K562 (cell line): ENCODE measurements at regions of chr5 and their contacts with region 1.

Region 1: GRCh38 chr5:91280362-91281269 is 102.5 kb downstream of the ARRDC3 start:
- DNase-seq: peak; percentile 89 to 96 (median 92)
- ATAC-seq: peak; percentile 99
- H3K4me3 ChIP-seq: peak overlapping the region; percentile 39
- H3K27ac ChIP-seq: peak overlapping the region; percentile 84
- H3K4me1 ChIP-seq: peaks cover 16 to 21% of the 10 kb centered on the region in 2 experiments; a peak in 3 of 5 replicates
- H3K27me3 ChIP-seq: no peaks in the 10 kb centered on the region
- CTCF ChIP-seq: peak in 1 of 3 experiments; percentile 20; a peak in 2 of 6 replicates
- EP300 ChIP-seq: peak; percentile 70
- POLR2A ChIP-seq: peak; percentile 71
- RAD21 ChIP-seq: peak; percentile 23 to 34; a peak in 1 of 4 replicates

Region 2: GRCh38 chr5:91266184-91266705 is 14.4 kb before region 1 on chr5:
- CTCF ChIA-PET with region 1: interaction called, 3 read pairs
- POLR2A ChIA-PET with region 1: interaction called, 17 read pairs
- in situ Hi-C with region 1: no loop called
- intact Hi-C with region 1: no loop called
- DNase-seq: peak; percentile 38 to 61 (median 45)
- ATAC-seq: peak; percentile 80
- H3K4me3 ChIP-seq: no peak overlapping the region
- H3K27ac ChIP-seq: peak overlapping the region; percentile 49; the same call in 1 of the 3 replicates
- H3K4me1 ChIP-seq: peaks cover 0 to 7% of the 10 kb centered on the region in 2 experiments; a peak in 3 of 5 replicates
- H3K27me3 ChIP-seq: no peaks in the 10 kb centered on the region
- CTCF ChIP-seq: no peak
- EP300 ChIP-seq: no peak
- POLR2A ChIP-seq: no peak
- RAD21 ChIP-seq: no peak

Region 3: GRCh38 chr5:91291628-91292569 is 11.3 kb after region 1 on chr5:
- CTCF ChIA-PET with region 1: no interaction called
- POLR2A ChIA-PET with region 1: interaction called, 11 read pairs
- in situ Hi-C with region 1: no loop called
- intact Hi-C with region 1: no loop called
- DNase-seq: peak in 2 of 4 experiments; percentile 38 to 64
- ATAC-seq: peak; percentile 90
- H3K4me3 ChIP-seq: no peak overlapping the region
- H3K27ac ChIP-seq: peak overlapping the region; percentile 22; the same call in 1 of the 3 replicates
- H3K4me1 ChIP-seq: peaks cover 0 to 14% of the 10 kb centered on the region in 2 experiments; a peak in 3 of 5 replicates
- H3K27me3 ChIP-seq: no peaks in the 10 kb centered on the region
- CTCF ChIP-seq: no peak
- EP300 ChIP-seq: no peak
- POLR2A ChIP-seq: no peak
- RAD21 ChIP-seq: no peak; a peak in 1 of 4 replicates

Region 4: GRCh38 chr5:91813537-91813936 is 532.9 kb after region 1 on chr5:
- CTCF ChIA-PET with region 1: no interaction called
- POLR2A ChIA-PET with region 1: no interaction called
- in situ Hi-C with region 1: no loop called
- intact Hi-C with region 1: no loop called
- DNase-seq: no peak
- ATAC-seq: no peak
- H3K4me3 ChIP-seq: no peak overlapping the region
- H3K27ac ChIP-seq: no peak overlapping the region
- H3K4me1 ChIP-seq: no peaks in the 10 kb centered on the region
- H3K27me3 ChIP-seq: no peaks in the 10 kb centered on the region
- CTCF ChIP-seq: no peak
- EP300 ChIP-seq: no peak
- POLR2A ChIP-seq: no peak
- RAD21 ChIP-seq: no peak